Testis (tissue), 5 donors: ENCODE measurements at regions of chr20 and their contacts with region 1.

Region 1: DNA sequence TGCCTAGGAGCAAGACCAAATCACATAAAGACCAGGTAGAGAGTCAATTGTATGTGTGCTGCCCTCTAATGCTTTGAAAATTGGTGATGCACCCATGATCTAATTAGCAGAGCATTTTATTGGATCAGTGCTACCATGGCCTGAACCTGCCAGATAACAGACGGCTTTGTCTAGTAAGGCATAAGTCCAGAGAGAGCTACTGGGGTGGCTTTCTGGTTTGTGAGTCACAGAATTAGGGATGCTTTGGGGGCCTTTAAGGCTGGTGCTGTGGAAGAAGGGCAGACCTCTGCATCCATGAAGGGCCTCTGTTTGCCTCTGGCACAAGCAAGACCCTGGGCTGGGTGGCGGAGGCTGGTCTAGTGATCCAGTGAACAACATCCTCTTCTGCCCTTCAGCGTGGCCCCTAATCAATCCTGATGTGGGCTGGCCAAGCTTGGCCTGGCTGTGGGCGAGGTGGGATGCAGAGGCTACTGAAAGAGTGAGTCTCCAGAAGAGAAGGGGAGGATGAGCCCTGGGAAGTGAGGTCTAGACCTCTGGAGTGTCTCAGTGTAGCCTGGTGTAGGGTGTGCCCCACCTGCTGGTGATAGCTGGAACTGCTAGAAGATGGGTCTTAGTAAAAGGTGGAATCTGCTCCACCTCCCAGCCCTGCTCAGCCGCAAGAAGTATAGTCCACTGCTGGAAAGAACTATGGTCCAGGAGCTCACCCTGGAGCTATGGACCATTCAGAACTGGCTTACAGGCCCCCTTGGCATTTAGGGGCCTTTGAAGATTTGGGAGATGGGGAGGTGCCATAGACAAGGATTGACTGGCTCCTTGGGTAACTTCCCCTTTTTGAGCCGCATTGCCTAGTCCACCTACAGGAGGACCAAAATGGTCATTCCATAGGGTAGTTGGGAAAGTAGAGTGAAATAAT is 36.7 kb upstream of the AAR2 start:
- DNase-seq: peak; percentile 96
- H3K4me3 ChIP-seq: no peak overlapping the region
- H3K27ac ChIP-seq: no peak overlapping the region
- H3K4me1 ChIP-seq: peaks cover 5% of the 10 kb centered on the region
- H3K27me3 ChIP-seq: no peaks in the 10 kb centered on the region
- CTCF ChIP-seq: peak; percentile 77 to 91 (median 83)
- POLR2A ChIP-seq: no peak

Region 2: DNA sequence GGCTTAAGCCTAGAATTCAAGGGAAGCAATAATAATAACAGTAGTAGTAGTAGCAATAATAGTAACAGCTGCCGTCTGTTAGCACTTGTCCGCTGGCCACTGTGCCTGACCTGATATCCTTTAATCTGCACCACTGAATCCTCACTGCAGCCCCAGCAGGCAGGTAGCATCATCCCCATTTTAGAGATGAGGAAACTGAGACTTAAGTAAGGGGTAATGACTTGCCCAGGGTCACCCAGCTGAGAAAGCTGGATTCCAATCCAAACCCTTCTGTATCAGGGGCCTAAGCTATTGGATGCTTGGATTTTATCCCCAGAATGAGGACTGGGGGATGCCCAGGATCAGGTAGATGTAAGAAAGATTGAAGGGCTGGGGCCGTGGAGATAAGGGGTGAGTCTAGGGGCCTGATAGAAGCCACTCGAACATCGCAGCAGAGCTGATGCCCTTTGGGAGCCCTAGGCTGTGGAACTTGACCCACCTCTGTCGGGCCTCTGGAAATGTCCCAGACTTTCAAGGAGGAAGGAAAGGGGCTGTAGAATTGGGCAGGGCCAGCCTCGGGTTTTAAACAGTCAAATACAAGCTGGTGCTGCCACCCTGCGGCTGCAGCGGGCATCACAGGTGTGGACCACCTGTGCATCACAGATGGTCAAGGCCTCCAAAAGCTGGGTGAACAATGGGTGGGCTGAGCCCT is 239.6 kb after region 1 on chr20:
- intact Hi-C with region 1: loop called (anchors 10 kb)
- DNase-seq: peak; percentile 79
- H3K4me3 ChIP-seq: no peak overlapping the region
- H3K27ac ChIP-seq: no peak overlapping the region
- H3K4me1 ChIP-seq: no peaks in the 10 kb centered on the region
- H3K27me3 ChIP-seq: no peaks in the 10 kb centered on the region
- CTCF ChIP-seq: peak; percentile 61 to 85 (median 80)
- POLR2A ChIP-seq: no peak